Breast epithelium (tissue), 4 donors: ENCODE measurements at regions of chr2 and their contacts with region 1.

Region 1: DNA sequence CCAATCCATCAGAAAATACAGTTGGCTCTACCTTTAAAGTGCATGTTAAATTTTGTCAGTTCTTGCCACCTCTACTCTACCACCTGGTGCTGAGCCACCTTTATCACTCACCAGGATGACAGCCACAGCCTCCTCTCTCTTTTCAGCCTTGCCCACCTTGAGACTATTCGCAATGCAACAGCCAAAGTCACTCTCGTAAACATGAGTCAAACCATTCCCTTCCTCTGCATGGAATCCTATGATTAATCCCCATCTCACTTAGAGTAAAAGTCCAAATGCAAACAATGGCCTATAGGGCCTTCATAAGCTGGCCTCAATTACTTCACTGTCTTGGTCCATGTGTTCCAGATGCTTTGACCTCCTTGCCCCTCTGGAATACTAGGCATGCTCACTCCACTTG is 5.8 kb upstream of the OSBPL6 start:
- DNase-seq: no peak
- H3K4me3 ChIP-seq: no peak overlapping the region
- H3K27ac ChIP-seq: no peak overlapping the region
- H3K4me1 ChIP-seq: no peaks in the 10 kb centered on the region
- H3K27me3 ChIP-seq: no peaks in the 10 kb centered on the region
- CTCF ChIP-seq: no peak
- POLR2A ChIP-seq: no peak

Region 2: GRCh38 chr2:178177066-178177679 is 11.3 kb before region 1 on chr2:
- intact Hi-C with region 1: loop called (anchors 1 kb)
- DNase-seq: no peak
- H3K4me3 ChIP-seq: no peak overlapping the region
- H3K27ac ChIP-seq: no peak overlapping the region
- H3K4me1 ChIP-seq: no peaks in the 10 kb centered on the region
- H3K27me3 ChIP-seq: no peaks in the 10 kb centered on the region
- CTCF ChIP-seq: no peak
- POLR2A ChIP-seq: no peak